K562 (cell line): ENCODE measurements at regions of chr10 and their contacts with region 1.

Region 1: GRCh38 chr10:26621889-26622711 is 75.4 kb upstream of the PDSS1 start:
- DNase-seq: peak in 2 of 4 experiments; percentile 13 to 14
- ATAC-seq: peak; percentile 83
- H3K4me3 ChIP-seq: peak overlapping the region; percentile 17; the same call in 1 of the 2 replicates
- H3K27ac ChIP-seq: no peak overlapping the region
- H3K4me1 ChIP-seq: peaks cover 0 to 6% of the 10 kb centered on the region in 2 experiments; a peak in 2 of 5 replicates
- H3K27me3 ChIP-seq: peaks cover 23 to 24% of the 10 kb centered on the region in 2 experiments
- CTCF ChIP-seq: no peak
- EP300 ChIP-seq: no peak
- POLR2A ChIP-seq: no peak
- RAD21 ChIP-seq: no peak

Region 2: GRCh38 chr10:26550774-26551526 is 71.2 kb before region 1 on chr10:
- CTCF ChIA-PET with region 1: no interaction called
- POLR2A ChIA-PET with region 1: no interaction called
- in situ Hi-C with region 1: no loop called
- intact Hi-C with region 1: no loop called
- DNase-seq: peak; percentile 13 to 37 (median 30)
- ATAC-seq: peak; percentile 80
- H3K4me3 ChIP-seq: no peak overlapping the region
- H3K27ac ChIP-seq: no peak overlapping the region
- H3K4me1 ChIP-seq: no peaks in the 10 kb centered on the region
- H3K27me3 ChIP-seq: no peaks in the 10 kb centered on the region; a peak in 1 of 5 replicates
- CTCF ChIP-seq: peak in 1 of 3 experiments; percentile 42; a peak in 1 of 6 replicates
- EP300 ChIP-seq: no peak
- POLR2A ChIP-seq: no peak
- RAD21 ChIP-seq: 0 out of 4 replicates have a peak, but pooled peaks of 1 of the 2 experiments have one; percentile 23

Region 3: DNA sequence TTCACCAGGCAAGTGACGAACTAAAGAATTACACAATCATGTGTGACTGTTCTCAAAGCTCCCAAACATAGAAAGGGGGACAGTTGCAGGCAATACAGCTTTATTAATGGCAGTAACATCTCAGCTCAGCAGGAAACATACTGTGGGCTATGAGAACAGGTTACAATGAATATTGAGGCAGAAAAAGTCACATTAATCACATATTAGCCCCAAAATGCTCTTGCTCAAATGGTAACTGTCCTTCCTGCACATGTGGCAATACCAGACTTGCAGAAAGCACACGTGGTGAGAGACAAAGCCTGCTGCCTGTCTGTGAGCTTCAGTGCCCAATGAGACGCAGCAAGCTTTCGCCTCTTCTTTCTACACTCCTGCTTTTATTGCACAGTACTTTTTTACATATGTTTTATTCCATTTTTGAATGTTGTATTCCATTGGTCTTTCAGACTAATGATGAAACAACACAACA is 723.4 kb after region 1 on chr10:
- CTCF ChIA-PET with region 1: no interaction called
- POLR2A ChIA-PET with region 1: no interaction called
- in situ Hi-C with region 1: no loop called
- intact Hi-C with region 1: loop called (anchors 10 kb)
- DNase-seq: no peak
- ATAC-seq: no peak
- H3K4me3 ChIP-seq: no peak overlapping the region
- H3K27ac ChIP-seq: no peak overlapping the region
- H3K4me1 ChIP-seq: peaks cover 0 to 3% of the 10 kb centered on the region in 2 experiments; a peak in 1 of 5 replicates
- H3K27me3 ChIP-seq: peaks cover 3 to 5% of the 10 kb centered on the region in 2 experiments; a peak in 4 of 5 replicates
- CTCF ChIP-seq: no peak
- EP300 ChIP-seq: no peak
- POLR2A ChIP-seq: no peak
- RAD21 ChIP-seq: no peak